H1 (cell line): ENCODE measurements at regions of chr11 and their contacts with region 1.

Region 1: GRCh38 chr11:97325693-97326092 is 935.9 kb downstream of the JRKL start:
- DNase-seq: peak in 1 of 2 experiments; percentile 53
- H3K4me3 ChIP-seq: no peak overlapping the region
- H3K27ac ChIP-seq: no peak overlapping the region
- H3K4me1 ChIP-seq: no peaks in the 10 kb centered on the region
- H3K27me3 ChIP-seq: no peaks in the 10 kb centered on the region
- CTCF ChIP-seq: peak; percentile 9 to 46 (median 44); a peak in 2 of 4 replicates
- EP300 ChIP-seq: no peak
- POLR2A ChIP-seq: no peak
- RAD21 ChIP-seq: peak; percentile 11 to 16; a peak in 1 of 4 replicates

Region 2: GRCh38 chr11:97336064-97336463 is 10.4 kb after region 1 on chr11:
- CTCF ChIA-PET with region 1: interaction called, 10 read pairs
- POLR2A ChIA-PET with region 1: no interaction called
- DNase-seq: no peak
- H3K4me3 ChIP-seq: no peak overlapping the region
- H3K27ac ChIP-seq: no peak overlapping the region
- H3K4me1 ChIP-seq: no peaks in the 10 kb centered on the region
- H3K27me3 ChIP-seq: no peaks in the 10 kb centered on the region
- CTCF ChIP-seq: no peak
- EP300 ChIP-seq: no peak
- POLR2A ChIP-seq: no peak
- RAD21 ChIP-seq: no peak

Region 3: GRCh38 chr11:97356144-97356543 is 30.5 kb after region 1 on chr11:
- CTCF ChIA-PET with region 1: no interaction called
- POLR2A ChIA-PET with region 1: no interaction called
- DNase-seq: no peak
- H3K4me3 ChIP-seq: no peak overlapping the region
- H3K27ac ChIP-seq: no peak overlapping the region
- H3K4me1 ChIP-seq: no peaks in the 10 kb centered on the region; a peak in 2 of 7 replicates
- H3K27me3 ChIP-seq: peaks cover 0 to 1% (median 0%) of the 10 kb centered on the region in 4 experiments; a peak in 1 of 7 replicates
- CTCF ChIP-seq: no peak
- EP300 ChIP-seq: no peak
- POLR2A ChIP-seq: no peak
- RAD21 ChIP-seq: no peak